ENCODE measurements at regions of chr17 and their contacts with region 1.

Region 1: DNA sequence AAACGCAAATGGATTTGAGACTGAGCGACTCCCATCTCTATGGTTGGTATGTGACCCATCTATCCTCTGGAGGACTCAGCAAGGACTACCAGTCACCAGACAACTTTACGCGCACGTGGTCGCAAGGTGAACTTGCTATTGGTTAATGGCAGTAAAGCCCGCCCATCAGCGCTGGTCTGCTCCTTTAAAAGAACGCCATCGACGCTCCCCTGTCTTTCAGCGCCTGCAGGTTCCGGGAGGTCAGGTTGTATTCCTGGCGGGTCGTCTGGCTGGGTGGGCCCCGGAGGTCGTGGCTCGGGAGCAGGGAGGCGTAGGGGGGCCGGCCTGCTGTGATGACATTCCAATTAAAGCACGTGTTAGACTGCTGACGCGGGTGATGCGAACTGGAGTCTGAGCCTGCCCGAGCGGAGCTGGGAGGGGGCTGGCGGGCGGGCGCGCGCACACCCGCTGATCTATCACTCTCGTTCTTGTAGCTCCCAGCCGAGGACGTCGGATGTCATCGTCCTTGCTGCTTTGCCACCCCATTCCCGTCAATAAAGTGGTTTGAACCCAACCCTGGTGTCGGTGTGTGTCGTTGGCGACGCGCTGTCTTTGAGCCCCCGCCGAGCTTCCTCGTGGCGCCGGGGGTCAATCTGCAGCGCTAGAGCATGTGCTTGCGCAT is 15.9 kb upstream of the ERN1 start:
- DNase-seq: peak; percentile 99
- H3K4me3 ChIP-seq: peak overlapping the region; percentile 80
- H3K27ac ChIP-seq: peak overlapping the region; percentile 94
- H3K4me1 ChIP-seq: peaks cover 4% of the 10 kb centered on the region
- H3K27me3 ChIP-seq: no peaks in the 10 kb centered on the region
- CTCF ChIP-seq: no peak

Region 2: DNA sequence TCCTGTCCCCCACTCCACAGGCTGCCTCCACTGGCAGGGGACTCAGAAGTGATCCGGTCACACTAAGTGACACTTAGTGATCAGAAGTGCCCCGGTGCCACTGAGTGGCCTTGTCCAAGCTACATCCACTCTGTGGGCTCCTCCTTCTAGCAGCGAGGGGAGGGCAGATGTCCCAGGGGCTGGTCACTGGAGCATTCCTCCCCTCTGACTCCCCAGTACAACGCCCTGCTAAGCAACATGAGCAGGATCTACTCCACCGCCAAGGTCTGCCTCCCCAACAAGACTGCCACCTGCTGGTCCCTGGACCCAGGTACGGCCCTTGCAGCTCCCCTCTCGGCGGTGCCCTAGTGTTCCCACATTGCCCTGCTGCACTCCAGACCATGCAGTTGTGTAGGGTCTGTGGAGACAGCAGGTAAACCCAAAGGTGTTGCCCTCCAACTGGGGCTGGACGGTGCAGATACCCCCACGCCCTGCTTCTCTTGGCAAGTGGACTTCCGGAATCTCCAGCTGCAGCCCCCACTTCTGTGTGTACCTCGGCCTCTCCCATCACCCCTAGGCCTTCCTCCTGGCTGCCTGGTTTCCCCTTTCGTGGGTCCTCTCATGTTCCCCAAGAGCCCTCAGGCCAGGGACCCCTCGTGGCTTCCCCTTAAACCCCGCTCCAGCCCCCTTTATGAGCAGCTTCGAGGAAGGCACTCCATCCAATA is 666.9 kb before region 1 on chr17:
- CTCF ChIA-PET with region 1: no interaction called
- POLR2A ChIA-PET with region 1: no interaction called
- intact Hi-C with region 1: no loop called
- DNase-seq: peak; percentile 84
- H3K4me3 ChIP-seq: no peak overlapping the region
- H3K27ac ChIP-seq: no peak overlapping the region
- H3K4me1 ChIP-seq: peaks cover 31% of the 10 kb centered on the region
- H3K27me3 ChIP-seq: no peaks in the 10 kb centered on the region
- CTCF ChIP-seq: peak; percentile 90

Region 3: DNA sequence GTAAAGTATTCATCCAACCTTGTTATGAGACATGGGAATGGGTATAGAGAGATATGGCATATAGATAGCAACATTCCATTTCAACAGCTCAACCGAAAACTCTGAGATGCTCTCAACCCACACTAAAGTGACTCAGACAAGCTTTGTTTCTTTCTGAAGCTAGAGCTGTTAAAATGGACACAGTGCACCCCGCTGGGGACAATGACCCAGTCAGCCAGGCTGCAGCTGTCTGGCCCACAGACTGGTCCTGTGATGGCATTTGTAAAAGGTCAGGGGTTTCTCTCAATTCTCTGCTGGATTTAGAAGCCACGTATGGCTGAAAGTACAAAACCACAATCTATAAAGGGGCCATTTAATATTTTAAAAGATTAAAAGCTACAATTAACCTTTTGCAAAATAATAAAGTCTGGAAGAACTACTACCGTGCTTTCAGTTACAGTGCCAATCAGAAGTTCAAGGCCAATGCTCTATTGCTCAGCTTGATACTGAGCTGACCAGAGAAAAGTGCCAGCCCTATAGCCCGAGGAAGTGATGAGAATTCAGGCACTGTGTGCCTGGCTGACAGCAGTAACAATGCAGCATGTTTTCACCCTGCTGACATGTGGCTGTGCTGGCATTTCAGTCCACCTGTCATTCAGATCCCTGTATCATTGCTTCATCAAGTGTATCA is 56.9 kb after region 1 on chr17:
- CTCF ChIA-PET with region 1: no interaction called
- POLR2A ChIA-PET with region 1: no interaction called
- intact Hi-C with region 1: no loop called
- DNase-seq: no peak
- H3K4me3 ChIP-seq: no peak overlapping the region
- H3K27ac ChIP-seq: no peak overlapping the region
- H3K4me1 ChIP-seq: peaks cover 4% of the 10 kb centered on the region
- H3K27me3 ChIP-seq: no peaks in the 10 kb centered on the region
- CTCF ChIP-seq: no peak

Region 4: GRCh38 chr17:64262417-64263260 is 116.8 kb after region 1 on chr17 and contains the start of gene TEX2:
- CTCF ChIA-PET with region 1: no interaction called
- POLR2A ChIA-PET with region 1: no interaction called
- intact Hi-C with region 1: loop called (anchors 5 kb)
- DNase-seq: peak; percentile 37
- H3K4me3 ChIP-seq: peak within 1 kb of the TSS; percentile 80
- H3K27ac ChIP-seq: peak within 1 kb of the TSS; percentile 64
- H3K4me1 ChIP-seq: peaks cover 11% of the 10 kb centered on the region
- H3K27me3 ChIP-seq: no peaks in the 10 kb centered on the region
- CTCF ChIP-seq: no peak
- total RNA-seq, gene TEX2: 16.1 and 17.5 TPM in 2 replicates

Region 5: DNA sequence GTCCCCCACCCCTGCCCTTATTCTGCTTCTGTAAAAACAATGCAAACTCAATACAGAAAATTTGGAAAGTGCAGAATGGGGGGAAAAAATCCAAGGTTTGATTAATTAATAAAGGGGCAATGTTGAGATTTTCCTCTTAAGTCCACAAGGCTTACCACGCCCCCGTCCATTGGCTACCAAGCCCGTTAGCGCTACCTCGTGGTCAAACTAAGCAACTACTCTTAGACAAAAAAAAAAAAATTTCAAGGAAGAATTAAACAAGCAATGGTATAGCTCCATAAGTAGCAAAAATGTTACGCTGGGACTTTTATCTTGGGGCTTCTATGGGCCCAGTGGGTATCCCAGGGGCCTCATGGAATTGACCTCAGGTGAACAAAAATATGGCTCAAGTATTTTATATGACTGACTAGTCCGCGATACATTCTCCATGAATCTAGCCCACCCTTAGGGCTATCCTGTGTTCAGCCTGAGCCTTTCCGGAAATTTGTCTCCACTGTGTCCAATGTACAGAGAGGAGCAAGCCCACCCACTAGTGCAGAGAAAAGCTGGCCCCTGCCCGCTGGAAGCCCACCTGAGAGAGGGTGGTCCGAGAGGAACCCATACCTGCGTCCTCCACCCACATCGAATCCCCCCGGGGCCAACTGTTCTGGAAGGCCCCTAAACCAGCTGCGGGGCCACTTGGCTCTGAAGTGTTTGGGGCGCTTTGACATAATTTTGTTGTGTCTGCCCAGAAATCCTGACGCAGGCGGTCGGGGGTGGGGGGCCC is 136.3 kb after region 1 on chr17:
- CTCF ChIA-PET with region 1: no interaction called
- POLR2A ChIA-PET with region 1: no interaction called
- intact Hi-C with region 1: loop called (anchors 1 kb)
- DNase-seq: peak; percentile 85
- H3K4me3 ChIP-seq: no peak overlapping the region
- H3K27ac ChIP-seq: no peak overlapping the region
- H3K4me1 ChIP-seq: peaks cover 6% of the 10 kb centered on the region
- H3K27me3 ChIP-seq: no peaks in the 10 kb centered on the region
- CTCF ChIP-seq: peak; percentile 85

Measured in A673 (cell line).